Activated T-helper 2 cell treated with anti-CD3 and anti-CD28 coated beads, Interferon-gamma antibody, Interleukin-2, Interleukin-4, amounts not matched to agents 10 μg/mL and 5 μg/mL and 100 μg/mL, durations not matched to agents 14 hours and 24 hours and 36 hours (primary cell): ENCODE measurements at regions of chr5 and their contacts with region 1.

Region 1: DNA sequence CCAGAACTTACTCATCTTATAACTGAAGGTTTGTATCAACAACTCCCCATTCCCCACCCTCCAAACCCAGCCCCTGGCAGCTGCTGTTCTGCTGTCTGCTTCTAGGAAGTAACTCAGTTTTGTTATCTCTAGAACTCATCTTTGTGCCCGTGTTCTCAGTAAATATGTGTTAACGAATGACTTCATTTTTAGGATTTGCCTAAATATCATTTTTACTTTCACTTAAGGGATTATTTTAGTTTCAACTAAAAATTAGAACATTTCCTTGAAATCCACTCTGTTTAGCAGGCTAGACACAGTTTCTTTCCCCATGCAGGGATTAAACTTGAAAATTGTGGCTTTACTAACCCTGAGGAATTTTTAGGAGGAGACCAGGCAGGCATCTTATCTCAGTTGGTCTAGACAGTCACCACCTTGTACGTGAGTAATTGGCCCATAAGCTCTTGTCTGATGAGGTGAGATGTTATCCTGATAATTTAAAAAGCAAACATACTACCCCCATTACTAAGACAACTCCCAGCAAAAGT is 68.2 kb upstream of the TNFAIP8 start:
- DNase-seq: peak; percentile 47
- H3K4me3 Mint-ChIP-seq: peak overlapping the region; percentile 77
- H3K27ac Mint-ChIP-seq: peak overlapping the region; percentile 97
- H3K4me1 Mint-ChIP-seq: peaks cover 91% of the 10 kb centered on the region
- H3K27me3 Mint-ChIP-seq: no peaks in the 10 kb centered on the region

Region 2: DNA sequence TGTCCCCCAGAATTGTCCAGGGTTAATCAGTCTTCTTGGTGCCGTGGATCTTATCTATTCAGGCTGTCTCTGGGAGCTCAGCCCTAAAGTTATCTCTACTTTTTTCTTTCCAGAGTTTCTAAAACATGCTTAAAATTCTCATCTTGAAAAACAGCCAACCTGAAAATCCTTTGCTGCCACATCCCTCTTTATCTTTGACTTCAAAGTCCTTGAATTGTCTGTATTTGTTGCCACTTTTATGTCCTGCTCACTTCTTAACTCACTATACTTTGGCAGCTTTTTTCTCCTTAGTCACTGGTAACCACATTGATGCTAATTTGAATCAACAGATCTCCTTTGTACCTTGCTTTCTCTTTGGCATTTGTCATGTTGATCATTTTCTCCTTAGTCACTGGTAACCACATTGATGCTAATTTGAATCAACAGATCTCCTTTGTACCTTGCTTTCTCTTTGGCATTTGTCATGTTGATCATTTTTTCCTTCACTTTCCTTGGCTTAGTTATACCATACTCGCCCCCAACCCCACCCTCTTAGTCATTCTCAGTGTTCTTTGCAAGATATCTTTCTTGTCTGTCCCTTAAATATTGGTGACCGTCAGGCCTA is 208.2 kb before region 1 on chr5:
- intact Hi-C with region 1: loop called (anchors 1 kb)
- DNase-seq: no peak
- H3K4me3 Mint-ChIP-seq: peak overlapping the region; percentile 43
- H3K27ac Mint-ChIP-seq: peak overlapping the region; percentile 73
- H3K4me1 Mint-ChIP-seq: peaks cover 41% of the 10 kb centered on the region
- H3K27me3 Mint-ChIP-seq: no peaks in the 10 kb centered on the region

Region 3: DNA sequence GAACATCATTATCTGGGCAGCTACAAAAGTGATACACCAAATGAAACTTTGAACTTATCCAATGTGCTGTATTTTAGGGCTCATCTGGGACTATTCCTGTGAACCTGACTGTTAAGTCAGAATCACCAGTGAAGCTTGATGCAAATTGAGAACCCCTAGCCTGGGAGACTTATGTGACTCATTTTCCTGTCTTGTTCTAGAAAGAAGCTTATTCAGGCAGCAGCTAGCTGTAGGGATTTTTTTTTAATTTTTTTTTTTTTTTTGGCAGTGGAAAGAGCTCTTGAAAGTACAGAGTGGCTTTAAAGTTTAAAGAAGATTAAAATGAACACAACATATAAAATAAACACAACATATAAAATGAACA is 12.9 kb before region 1 on chr5:
- intact Hi-C with region 1: loop called (anchors 1 kb)
- DNase-seq: no peak
- H3K4me3 Mint-ChIP-seq: peak overlapping the region; percentile 52
- H3K27ac Mint-ChIP-seq: peak overlapping the region; percentile 92
- H3K4me1 Mint-ChIP-seq: peaks cover 88% of the 10 kb centered on the region
- H3K27me3 Mint-ChIP-seq: no peaks in the 10 kb centered on the region

Region 4: DNA sequence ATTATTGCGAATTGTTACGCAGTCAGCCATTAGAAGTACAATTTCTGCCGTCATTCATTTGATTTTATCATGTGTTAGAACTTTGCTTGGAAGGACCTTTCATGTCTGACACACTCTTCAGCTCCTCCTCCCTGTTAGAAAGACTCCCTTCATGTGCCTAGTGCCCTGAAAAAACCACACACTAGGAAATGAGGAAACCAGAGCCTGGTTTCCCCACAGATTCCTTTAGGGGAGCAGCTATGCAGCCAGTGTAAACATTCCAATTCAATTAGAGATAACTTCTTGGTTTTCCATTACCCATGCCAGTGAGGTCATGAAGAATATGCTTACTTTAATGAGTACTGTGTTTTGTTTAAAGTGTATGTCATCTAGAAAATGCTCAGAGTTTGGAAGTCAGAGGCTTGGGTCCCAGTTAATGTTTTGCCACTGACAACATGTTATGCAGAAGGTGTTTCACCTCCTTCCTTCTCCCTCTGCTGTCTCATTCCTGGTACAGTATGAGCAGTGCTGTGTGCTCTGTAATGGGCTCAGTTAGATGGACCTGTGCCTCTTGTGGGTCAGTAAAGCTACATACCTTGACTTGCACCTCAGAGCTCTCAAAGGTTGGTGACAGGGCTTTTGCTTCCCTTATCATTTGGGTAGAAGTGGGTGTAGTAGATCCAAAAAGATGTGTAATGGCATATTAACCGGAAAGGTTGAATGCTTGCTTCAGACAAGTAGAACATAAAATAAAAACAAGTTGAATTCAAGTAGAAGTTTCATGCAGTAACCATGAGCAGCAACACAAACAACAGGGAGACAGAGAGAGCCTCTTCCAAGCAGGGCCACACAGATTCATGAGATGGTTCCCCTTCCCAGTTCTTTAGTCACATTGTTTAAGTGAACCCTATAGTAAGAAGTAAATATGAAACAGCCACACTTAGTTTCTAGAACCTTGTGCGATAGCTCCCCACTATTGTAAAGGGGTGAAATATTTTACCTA is 15.6 kb after region 1 on chr5:
- intact Hi-C with region 1: loop called (anchors 1 kb)
- DNase-seq: no peak
- H3K4me3 Mint-ChIP-seq: peak overlapping the region; percentile 38
- H3K27ac Mint-ChIP-seq: peak overlapping the region; percentile 81
- H3K4me1 Mint-ChIP-seq: peaks cover 82% of the 10 kb centered on the region
- H3K27me3 Mint-ChIP-seq: no peaks in the 10 kb centered on the region

Region 5: DNA sequence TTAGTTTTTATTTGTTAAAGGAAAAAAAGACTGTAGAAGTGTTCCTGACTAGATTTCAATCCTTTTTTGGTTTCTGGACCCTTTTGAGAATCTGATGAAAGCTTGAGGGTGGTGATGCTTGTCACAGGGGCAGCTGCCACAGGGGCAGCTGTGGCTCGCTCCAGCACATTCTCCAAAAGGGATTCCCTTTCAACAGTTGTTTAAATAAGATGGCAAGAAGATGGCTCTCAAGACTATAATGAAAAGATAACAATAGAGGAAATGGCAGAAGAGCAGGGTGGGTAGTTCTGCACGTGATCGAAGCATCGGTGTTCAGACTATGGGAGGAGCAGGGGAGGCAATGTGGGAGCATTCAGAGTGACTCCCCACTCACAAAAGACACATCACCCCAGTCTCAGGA is 21.7 kb after region 1 on chr5:
- intact Hi-C with region 1: loop called (anchors 1 kb)
- DNase-seq: no peak
- H3K4me3 Mint-ChIP-seq: peak overlapping the region; percentile 67
- H3K27ac Mint-ChIP-seq: peak overlapping the region; percentile 96
- H3K4me1 Mint-ChIP-seq: peaks cover 88% of the 10 kb centered on the region
- H3K27me3 Mint-ChIP-seq: no peaks in the 10 kb centered on the region